MCF 10A (cell line): ENCODE measurements at regions of chr17 and their contacts with region 1.

Region 1: GRCh38 chr17:58121925-58122324 is 26.3 kb upstream of the OR4D1 start:
- DNase-seq: peak; percentile 57
- H3K4me3 Mint-ChIP-seq: no peak overlapping the region
- H3K27ac Mint-ChIP-seq: no peak overlapping the region
- H3K4me1 Mint-ChIP-seq: no peaks in the 10 kb centered on the region
- H3K27me3 Mint-ChIP-seq: peaks cover 63% of the 10 kb centered on the region
- CTCF ChIP-seq: peak; percentile 35

Region 2: GRCh38 chr17:58077638-58078037 is 44.3 kb before region 1 on chr17:
- CTCF ChIA-PET with region 1: no interaction called
- POLR2A ChIA-PET with region 1: no interaction called
- intact Hi-C with region 1: no loop called
- DNase-seq: no peak
- H3K4me3 Mint-ChIP-seq: no peak overlapping the region
- H3K27ac Mint-ChIP-seq: no peak overlapping the region
- H3K4me1 Mint-ChIP-seq: no peaks in the 10 kb centered on the region
- H3K27me3 Mint-ChIP-seq: peaks cover 55% of the 10 kb centered on the region
- CTCF ChIP-seq: no peak

Region 3: DNA sequence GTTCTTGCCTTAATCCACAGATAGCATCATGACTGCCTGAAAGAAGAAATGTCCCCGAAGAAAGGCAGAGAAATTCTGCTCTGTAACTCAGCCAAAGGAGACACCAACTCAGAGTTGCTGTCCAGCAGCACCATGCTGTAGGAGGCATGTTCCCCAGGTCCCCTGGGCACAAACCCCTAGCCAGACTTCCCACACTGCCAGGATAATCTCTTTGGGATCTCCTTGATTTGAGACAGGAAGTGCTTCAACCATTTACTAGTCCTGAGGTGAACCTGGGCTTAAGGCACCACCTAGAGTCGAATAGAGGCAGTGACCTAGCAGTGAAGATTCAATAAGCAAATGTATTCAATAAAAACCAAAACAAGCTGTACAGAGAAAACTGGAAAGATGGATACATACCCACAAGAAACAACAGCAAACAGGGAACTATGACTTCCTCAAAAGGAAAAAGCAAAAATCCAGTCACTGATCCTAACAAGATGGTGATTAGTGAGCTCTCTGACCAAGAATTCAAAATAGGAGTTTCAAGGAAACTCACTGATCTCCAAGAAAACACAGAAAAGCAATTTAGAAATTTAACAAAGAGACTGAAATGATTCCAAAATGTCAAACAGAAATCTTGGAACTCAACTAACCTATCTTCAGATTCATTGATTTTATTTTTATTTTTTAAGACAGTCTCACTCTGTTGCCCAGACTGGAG is 50.6 kb after region 1 on chr17:
- CTCF ChIA-PET with region 1: interaction called, 3 read pairs
- POLR2A ChIA-PET with region 1: no interaction called
- intact Hi-C with region 1: loop called (anchors 1 kb)
- DNase-seq: peak; percentile 62
- H3K4me3 Mint-ChIP-seq: no peak overlapping the region
- H3K27ac Mint-ChIP-seq: no peak overlapping the region
- H3K4me1 Mint-ChIP-seq: no peaks in the 10 kb centered on the region
- H3K27me3 Mint-ChIP-seq: peaks cover 99% of the 10 kb centered on the region
- CTCF ChIP-seq: peak; percentile 52